Caco-2 (cell line): ENCODE measurements at regions of chrX and their contacts with region 1.

Region 1: GRCh38 chrX:14528629-14529289 is 577 bp upstream of the GLRA2 start:
- DNase-seq: peak; percentile 50 to 60
- H3K4me3 ChIP-seq: no peak overlapping the region
- H3K4me3 Mint-ChIP-seq: peak overlapping the region; percentile 53
- H3K27ac Mint-ChIP-seq: no peak overlapping the region
- H3K4me1 ChIP-seq: no peaks in the 10 kb centered on the region
- H3K4me1 Mint-ChIP-seq: no peaks in the 10 kb centered on the region
- H3K27me3 ChIP-seq: no peaks in the 10 kb centered on the region
- H3K27me3 Mint-ChIP-seq: no peaks in the 10 kb centered on the region
- CTCF ChIP-seq: peak; percentile 28 to 31

Region 2: DNA sequence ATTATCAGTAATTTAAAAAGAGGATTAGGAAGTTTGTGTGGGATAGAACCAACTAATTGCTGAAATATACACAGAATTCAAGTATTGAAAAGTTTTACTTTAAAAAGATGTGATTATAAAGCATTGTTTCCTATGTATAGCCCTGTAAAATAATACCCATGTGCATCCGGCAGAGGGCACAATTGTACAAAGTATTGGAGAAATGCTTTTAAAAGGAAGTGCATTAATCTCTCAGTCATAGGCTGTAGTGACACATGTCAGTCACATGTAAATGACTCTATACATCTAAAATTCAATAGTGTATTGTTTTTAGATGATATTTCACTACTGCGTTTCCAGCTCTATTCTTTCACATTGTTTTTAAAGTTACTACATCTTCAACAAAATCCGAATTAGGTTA is 489.4 kb before region 1 on chrX:
- CTCF ChIA-PET with region 1: no interaction called
- POLR2A ChIA-PET with region 1: no interaction called
- intact Hi-C with region 1: loop called (anchors 1 kb)
- DNase-seq: peak; percentile 34 to 47
- H3K4me3 ChIP-seq: no peak overlapping the region
- H3K4me3 Mint-ChIP-seq: no peak overlapping the region
- H3K27ac Mint-ChIP-seq: no peak overlapping the region
- H3K4me1 ChIP-seq: no peaks in the 10 kb centered on the region
- H3K4me1 Mint-ChIP-seq: no peaks in the 10 kb centered on the region
- H3K27me3 ChIP-seq: no peaks in the 10 kb centered on the region
- H3K27me3 Mint-ChIP-seq: peaks cover 4% of the 10 kb centered on the region
- CTCF ChIP-seq: peak; percentile 31 to 42

Region 3: GRCh38 chrX:14051416-14051815 is 477.3 kb before region 1 on chrX:
- CTCF ChIA-PET with region 1: no interaction called
- POLR2A ChIA-PET with region 1: no interaction called
- intact Hi-C with region 1: loop called (anchors 5 kb)
- DNase-seq: no peak
- H3K4me3 ChIP-seq: no peak overlapping the region
- H3K4me3 Mint-ChIP-seq: no peak overlapping the region
- H3K27ac Mint-ChIP-seq: no peak overlapping the region
- H3K4me1 ChIP-seq: peaks cover 5% of the 10 kb centered on the region
- H3K4me1 Mint-ChIP-seq: peaks cover 4% of the 10 kb centered on the region
- H3K27me3 ChIP-seq: no peaks in the 10 kb centered on the region
- H3K27me3 Mint-ChIP-seq: no peaks in the 10 kb centered on the region
- CTCF ChIP-seq: no peak

Region 4: DNA sequence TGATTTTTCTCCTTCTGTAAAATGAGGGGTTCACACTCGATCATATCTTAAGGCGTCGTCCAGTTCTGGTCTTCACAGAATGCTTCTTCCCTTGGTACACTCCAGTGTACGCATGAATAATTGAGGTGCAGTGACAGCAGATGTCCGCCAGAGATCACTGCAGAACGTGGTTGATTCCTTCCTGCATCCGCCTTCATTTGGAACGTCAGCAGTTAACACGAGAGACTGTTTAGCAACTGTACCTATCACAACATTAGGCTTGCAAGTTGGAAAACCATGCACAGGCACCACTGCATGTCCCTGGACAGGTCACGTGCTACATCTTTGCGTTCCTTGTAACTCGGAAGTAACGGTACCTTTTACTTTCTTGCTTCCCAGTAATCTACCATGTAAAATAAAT is 433.1 kb before region 1 on chrX:
- CTCF ChIA-PET with region 1: no interaction called
- POLR2A ChIA-PET with region 1: no interaction called
- intact Hi-C with region 1: loop called (anchors 1 kb)
- DNase-seq: peak; percentile 30 to 38
- H3K4me3 ChIP-seq: no peak overlapping the region
- H3K4me3 Mint-ChIP-seq: no peak overlapping the region
- H3K27ac Mint-ChIP-seq: no peak overlapping the region
- H3K4me1 ChIP-seq: no peaks in the 10 kb centered on the region
- H3K4me1 Mint-ChIP-seq: no peaks in the 10 kb centered on the region
- H3K27me3 ChIP-seq: no peaks in the 10 kb centered on the region
- H3K27me3 Mint-ChIP-seq: no peaks in the 10 kb centered on the region
- CTCF ChIP-seq: peak in 1 of 2 experiments; percentile 44

Region 5: DNA sequence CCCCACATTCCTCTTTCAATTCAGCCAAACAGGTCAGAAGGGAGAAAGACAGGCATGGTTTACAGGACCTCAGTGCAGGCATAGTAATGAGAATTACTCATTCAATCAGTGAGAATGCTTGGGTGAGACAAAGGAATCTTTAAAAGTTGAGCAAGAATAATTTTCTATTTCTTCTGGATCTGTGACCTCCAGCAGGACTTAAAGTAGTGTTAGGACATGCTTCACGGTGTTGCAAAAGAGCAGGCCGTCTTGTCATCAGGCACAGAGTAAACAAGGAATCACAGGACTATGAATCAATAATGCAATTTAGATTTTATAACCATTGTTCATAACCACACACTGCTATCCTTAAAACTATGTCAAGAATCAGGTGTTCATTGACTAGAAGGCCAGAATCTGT is 130.0 kb before region 1 on chrX:
- CTCF ChIA-PET with region 1: no interaction called
- POLR2A ChIA-PET with region 1: no interaction called
- intact Hi-C with region 1: no loop called
- DNase-seq: peak; percentile 4 to 53
- H3K4me3 ChIP-seq: no peak overlapping the region
- H3K4me3 Mint-ChIP-seq: no peak overlapping the region
- H3K27ac Mint-ChIP-seq: no peak overlapping the region
- H3K4me1 ChIP-seq: 0 out of 2 replicates have a peak, but pooled peaks cover 6% of the 10 kb centered on the region
- H3K4me1 Mint-ChIP-seq: peaks cover 6% of the 10 kb centered on the region
- H3K27me3 ChIP-seq: no peaks in the 10 kb centered on the region
- H3K27me3 Mint-ChIP-seq: no peaks in the 10 kb centered on the region
- CTCF ChIP-seq: no peak